ENCODE measurements at regions of chr5 and their contacts with region 1.

Region 1: GRCh38 chr5:139293504-139294373 is at the start of gene MATR3:
- DNase-seq: peak; percentile 91
- ATAC-seq: peak; percentile 88
- H3K4me3 ChIP-seq: peak within 1 kb of the TSS; percentile 97
- H3K27ac ChIP-seq: peak within 1 kb of the TSS; percentile 88
- H3K4me1 ChIP-seq: peaks cover 21% of the 10 kb centered on the region; the same call in 1 of the 2 replicates
- H3K27me3 ChIP-seq: no peaks in the 10 kb centered on the region
- CTCF ChIP-seq: no peak
- total RNA-seq, gene MATR3: 139 and 162 TPM in 2 replicates

Region 2: DNA sequence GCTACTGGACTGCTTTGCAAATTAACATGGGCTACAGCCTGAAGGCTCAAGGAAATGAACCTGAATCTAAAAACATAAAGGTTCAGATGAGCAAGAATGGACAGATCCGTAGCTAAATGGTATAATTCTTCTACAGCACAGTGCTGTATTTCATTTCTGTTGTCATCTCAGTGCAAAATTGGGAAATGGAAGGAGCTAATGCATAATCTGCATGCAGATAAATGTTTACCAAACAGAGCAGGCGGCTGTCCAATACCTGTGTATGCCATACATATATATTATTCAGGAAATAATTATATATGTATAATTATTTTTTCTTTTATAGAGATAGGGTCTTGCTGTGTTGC is 714.2 kb before region 1 on chr5:
- CTCF ChIA-PET with region 1: no interaction called
- POLR2A ChIA-PET with region 1: interaction called, 17 read pairs
- intact Hi-C with region 1: no loop called
- DNase-seq: no peak
- ATAC-seq: no peak
- H3K4me3 ChIP-seq: no peak overlapping the region
- H3K27ac ChIP-seq: no peak overlapping the region
- H3K4me1 ChIP-seq: peaks cover 3% of the 10 kb centered on the region; the same call in 1 of the 2 replicates
- H3K27me3 ChIP-seq: no peaks in the 10 kb centered on the region
- CTCF ChIP-seq: no peak

Region 3: DNA sequence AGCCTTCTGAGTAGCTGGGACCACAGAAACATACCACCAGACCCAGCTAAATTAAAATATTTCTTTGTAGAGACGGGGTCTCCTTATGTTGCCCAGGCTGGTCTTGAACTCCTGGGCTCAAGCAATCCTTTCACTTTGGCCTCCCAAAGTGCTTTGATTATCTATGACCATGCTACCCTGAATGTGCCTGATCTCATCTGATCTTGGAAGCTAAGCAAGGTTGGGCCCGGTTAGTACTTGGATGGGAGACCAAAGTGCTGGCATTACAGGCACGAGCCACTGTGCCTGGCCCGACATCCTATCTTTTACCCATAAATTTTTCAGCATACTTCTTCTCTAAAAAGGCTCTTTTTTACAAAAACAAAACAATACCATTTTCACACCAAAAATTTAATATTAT is 281.6 kb before region 1 on chr5:
- CTCF ChIA-PET with region 1: no interaction called
- POLR2A ChIA-PET with region 1: interaction called, 15 read pairs
- intact Hi-C with region 1: no loop called
- DNase-seq: no peak
- ATAC-seq: no peak
- H3K4me3 ChIP-seq: no peak overlapping the region
- H3K27ac ChIP-seq: no peak overlapping the region
- H3K4me1 ChIP-seq: peaks cover 15% of the 10 kb centered on the region
- H3K27me3 ChIP-seq: no peaks in the 10 kb centered on the region
- CTCF ChIP-seq: no peak

Region 4: DNA sequence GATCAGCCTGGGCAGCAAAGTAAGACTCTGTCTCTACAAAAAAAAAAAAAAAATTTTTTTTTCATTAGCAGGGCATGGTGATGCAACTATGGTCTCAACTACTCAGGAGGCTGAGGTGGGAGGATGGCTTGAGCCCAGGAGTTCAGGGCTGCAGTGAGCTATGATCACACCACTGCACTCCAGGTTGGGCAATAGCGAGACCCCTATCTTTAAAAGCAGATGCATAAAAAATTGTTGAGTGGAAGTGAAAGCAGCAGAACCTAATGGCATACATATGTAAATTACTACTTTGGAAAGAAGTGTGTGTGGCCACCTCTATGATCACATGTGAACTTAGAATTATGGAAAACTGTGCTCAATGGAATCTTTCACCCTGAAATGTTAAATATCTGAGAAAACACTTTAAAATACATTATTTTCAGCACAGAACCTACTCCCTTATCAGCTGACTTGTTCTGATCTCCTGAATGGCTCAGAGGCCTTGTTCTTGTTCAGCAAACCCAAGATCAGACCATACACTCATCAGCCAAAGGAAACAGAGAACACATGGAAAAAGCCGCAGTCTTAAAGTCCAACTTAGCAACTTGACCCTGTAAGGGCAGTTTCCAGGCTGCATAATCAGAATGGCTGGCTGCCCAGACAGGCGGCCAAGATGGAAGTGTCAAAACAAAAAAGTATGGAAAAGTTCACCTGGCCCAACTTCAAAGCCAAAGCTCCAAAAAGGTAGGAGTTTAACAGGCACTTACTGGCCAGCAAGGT is 152.1 kb before region 1 on chr5:
- CTCF ChIA-PET with region 1: no interaction called
- POLR2A ChIA-PET with region 1: interaction called, 10 read pairs
- intact Hi-C with region 1: no loop called
- DNase-seq: peak; percentile 22
- ATAC-seq: no peak
- H3K4me3 ChIP-seq: no peak overlapping the region
- H3K27ac ChIP-seq: no peak overlapping the region
- H3K4me1 ChIP-seq: peaks cover 11% of the 10 kb centered on the region
- H3K27me3 ChIP-seq: no peaks in the 10 kb centered on the region
- CTCF ChIP-seq: no peak

Region 5: DNA sequence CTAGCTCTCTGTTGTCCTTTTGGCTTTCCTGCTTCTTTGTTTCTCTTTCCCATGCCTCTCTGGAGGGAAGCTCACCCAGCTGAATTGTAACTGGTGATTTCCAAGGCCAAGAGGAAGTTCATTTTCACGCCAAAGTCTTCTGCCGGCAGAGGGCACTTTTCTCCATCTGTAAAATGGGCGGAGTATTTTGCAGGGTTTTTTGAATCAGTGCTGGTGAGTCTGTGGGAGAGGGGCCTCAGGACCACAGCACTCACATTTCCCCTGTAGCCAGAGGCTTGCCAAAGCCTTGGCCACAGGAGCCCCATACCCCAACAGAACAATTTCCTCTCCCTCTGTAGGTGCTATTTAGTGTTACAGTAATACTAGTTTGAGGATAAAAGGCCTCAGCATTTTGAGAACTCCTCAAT is 42.5 kb before region 1 on chr5:
- CTCF ChIA-PET with region 1: no interaction called
- POLR2A ChIA-PET with region 1: no interaction called
- intact Hi-C with region 1: no loop called
- DNase-seq: peak; percentile 48
- ATAC-seq: no peak; the same call in 1 of the 2 replicates
- H3K4me3 ChIP-seq: no peak overlapping the region
- H3K27ac ChIP-seq: no peak overlapping the region
- H3K4me1 ChIP-seq: peaks cover 4% of the 10 kb centered on the region; the same call in 1 of the 2 replicates
- H3K27me3 ChIP-seq: no peaks in the 10 kb centered on the region
- CTCF ChIP-seq: peak; percentile 63

Region 6: DNA sequence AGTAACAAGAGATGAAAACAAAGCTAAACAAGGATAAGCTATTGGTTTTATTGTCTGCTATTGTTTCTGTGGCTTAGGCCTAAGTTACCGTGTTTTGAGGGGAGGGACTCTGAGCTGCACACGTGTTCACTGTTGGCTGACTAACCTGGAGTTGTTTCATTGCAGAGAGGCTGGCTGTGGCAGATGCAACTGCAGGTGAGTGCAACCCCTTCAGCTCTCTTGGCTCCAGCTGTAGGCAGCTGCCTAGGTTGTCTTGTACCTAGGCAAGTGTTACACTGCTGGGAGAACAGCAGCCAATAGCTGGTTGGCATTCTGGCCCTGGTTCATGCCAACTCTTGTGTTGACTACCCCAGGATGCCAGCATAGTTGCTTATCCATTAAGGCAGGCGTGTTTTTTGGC is 17.8 kb before region 1 on chr5:
- CTCF ChIA-PET with region 1: no interaction called
- POLR2A ChIA-PET with region 1: interaction called, 17 read pairs
- intact Hi-C with region 1: no loop called
- DNase-seq: peak; percentile 48
- ATAC-seq: peak; percentile 27; the same call in 1 of the 2 replicates
- H3K4me3 ChIP-seq: peak overlapping the region; percentile 100
- H3K27ac ChIP-seq: peak overlapping the region; percentile 66
- H3K4me1 ChIP-seq: peaks cover 65% of the 10 kb centered on the region
- H3K27me3 ChIP-seq: no peaks in the 10 kb centered on the region
- CTCF ChIP-seq: no peak

Region 7: DNA sequence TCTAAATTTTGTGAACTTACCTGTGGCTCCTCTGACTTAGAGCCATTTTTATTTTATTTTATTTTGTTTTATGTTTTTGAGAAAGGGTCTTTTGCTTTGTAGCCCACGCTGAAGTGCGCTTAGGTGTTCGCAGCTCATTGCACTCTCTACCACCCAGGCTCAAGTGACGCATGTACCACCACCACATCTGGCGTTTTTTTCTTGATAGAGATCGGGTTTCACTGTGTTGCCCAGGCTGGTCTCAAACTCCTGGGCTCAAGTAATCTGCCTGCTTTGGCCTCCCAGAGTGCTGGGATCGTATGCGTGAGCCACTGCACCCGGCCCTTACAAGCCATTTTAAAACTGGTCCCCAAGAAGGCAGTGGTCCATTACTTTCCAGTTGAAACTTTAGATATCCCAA is 18.3 kb after region 1 on chr5:
- CTCF ChIA-PET with region 1: no interaction called
- POLR2A ChIA-PET with region 1: interaction called, 13 read pairs
- intact Hi-C with region 1: no loop called
- DNase-seq: no peak
- ATAC-seq: no peak
- H3K4me3 ChIP-seq: no peak overlapping the region
- H3K27ac ChIP-seq: no peak overlapping the region
- H3K4me1 ChIP-seq: peaks cover 12% of the 10 kb centered on the region; the same call in 1 of the 2 replicates
- H3K27me3 ChIP-seq: no peaks in the 10 kb centered on the region
- CTCF ChIP-seq: no peak

Region 8: DNA sequence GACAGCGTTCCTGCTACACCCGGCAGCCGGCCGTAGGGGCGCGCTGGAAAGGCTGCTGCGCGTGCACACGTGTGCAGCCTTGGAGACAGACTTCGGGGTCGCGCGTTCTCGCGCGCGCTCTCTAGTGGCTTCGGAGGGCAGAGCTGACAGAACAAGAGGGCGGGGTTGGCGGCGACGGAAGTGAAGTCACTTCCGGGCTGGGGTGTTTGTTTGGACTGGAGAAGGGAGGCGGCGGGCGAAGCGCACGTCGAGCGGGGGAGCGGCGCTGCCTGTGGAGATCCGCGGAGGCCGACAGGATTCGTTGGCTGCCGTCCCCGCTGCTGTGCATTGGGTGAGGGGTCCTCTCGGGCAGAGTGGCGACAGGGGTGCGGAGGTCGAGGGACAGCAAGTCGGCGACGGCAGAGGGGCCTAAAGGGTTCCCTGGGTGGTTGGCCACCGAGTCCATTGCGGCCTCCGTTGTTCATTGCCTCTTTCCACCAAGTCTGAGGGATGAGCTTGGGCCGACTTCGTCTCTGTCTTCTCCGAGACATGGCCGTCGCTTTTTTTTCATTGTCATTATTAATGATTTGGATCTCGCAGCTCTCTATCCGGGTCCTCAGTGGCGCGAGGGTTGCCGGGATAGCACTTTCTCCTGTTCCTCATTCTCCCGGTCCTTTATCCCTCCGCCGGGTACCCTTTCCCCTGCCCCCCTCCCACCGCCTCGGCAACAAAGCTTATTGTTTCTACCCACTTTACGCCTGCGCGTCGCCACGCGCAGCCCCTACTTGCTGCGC is 48.1 kb after region 1 on chr5 and contains the start of gene PAIP2:
- CTCF ChIA-PET with region 1: interaction called, 3 read pairs
- POLR2A ChIA-PET with region 1: no interaction called
- intact Hi-C with region 1: loop called (anchors 2 kb)
- DNase-seq: peak; percentile 95
- ATAC-seq: peak; percentile 78
- H3K4me3 ChIP-seq: peak within 1 kb of the TSS; percentile 96
- H3K27ac ChIP-seq: peak within 1 kb of the TSS; percentile 93
- H3K4me1 ChIP-seq: peaks cover 18% of the 10 kb centered on the region
- H3K27me3 ChIP-seq: no peaks in the 10 kb centered on the region
- CTCF ChIP-seq: peak; percentile 63
- total RNA-seq, gene PAIP2: 35.1 and 39.3 TPM in 2 replicates